ENCODE measurements at regions of chr6 and their contacts with region 1.

Region 1: GRCh38 chr6:42050266-42051032 is at the start of gene TAF8:
- DNase-seq: peak; percentile 82 to 92 (median 86)
- H3K4me3 ChIP-seq: peak within 1 kb of the TSS; percentile 79
- H3K4me3 Mint-ChIP-seq: peak within 1 kb of the TSS; percentile 96 to 99 (median 98)
- H3K27ac ChIP-seq: peak within 1 kb of the TSS; percentile 82
- H3K27ac Mint-ChIP-seq: peak within 1 kb of the TSS; percentile 88 to 98 (median 96)
- H3K4me1 ChIP-seq: peaks cover 55% of the 10 kb centered on the region
- H3K4me1 Mint-ChIP-seq: peaks cover 54 to 77% (median 64%) of the 10 kb centered on the region in 3 donors
- H3K27me3 ChIP-seq: no peaks in the 10 kb centered on the region
- H3K27me3 Mint-ChIP-seq: no peaks in the 10 kb centered on the region
- total RNA-seq, gene TAF8: 41.7 to 42.6 TPM

Region 2: DNA sequence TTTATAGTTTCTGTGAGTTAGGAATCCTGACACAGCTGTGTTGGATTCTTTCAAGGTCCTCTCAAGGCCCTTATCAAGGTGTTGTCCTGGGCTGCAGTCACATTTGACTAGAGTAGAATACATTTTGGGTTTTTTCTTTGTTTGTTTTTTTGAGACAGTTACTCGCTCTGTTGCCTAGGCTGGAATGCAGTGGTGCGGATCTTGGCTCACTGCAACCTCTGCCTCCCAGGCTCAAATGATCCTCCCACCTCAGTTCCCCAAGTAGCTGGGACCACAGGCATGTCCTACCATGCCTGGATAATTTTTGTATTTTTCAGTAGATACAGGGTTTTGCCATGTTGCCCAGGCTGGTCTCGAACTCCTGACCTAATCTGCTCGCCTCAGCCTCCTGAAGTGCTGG is 962.0 kb before region 1 on chr6:
- CTCF ChIA-PET with region 1: no interaction called
- POLR2A ChIA-PET with region 1: interaction called, 10 read pairs
- DNase-seq: no peak
- H3K4me3 ChIP-seq: no peak overlapping the region
- H3K4me3 Mint-ChIP-seq: no peak overlapping the region
- H3K27ac ChIP-seq: no peak overlapping the region
- H3K27ac Mint-ChIP-seq: peak overlapping the region in 2 of 8 donors; percentile 11 to 72
- H3K4me1 ChIP-seq: no peaks in the 10 kb centered on the region
- H3K4me1 Mint-ChIP-seq: peaks cover 15 to 21% (median 17%) of the 10 kb centered on the region in 3 donors
- H3K27me3 ChIP-seq: no peaks in the 10 kb centered on the region
- H3K27me3 Mint-ChIP-seq: no peaks in the 10 kb centered on the region

Region 3: GRCh38 chr6:41787219-41787917 is 263.1 kb before region 1 on chr6 and contains the start of gene TOMM6:
- CTCF ChIA-PET with region 1: interaction called, 175 read pairs
- POLR2A ChIA-PET with region 1: interaction called, 23 read pairs
- DNase-seq: peak; percentile 92 to 96 (median 93)
- H3K4me3 ChIP-seq: peak within 1 kb of the TSS; percentile 100
- H3K4me3 Mint-ChIP-seq: peak within 1 kb of the TSS; percentile 94 to 97 (median 96)
- H3K27ac ChIP-seq: peak within 1 kb of the TSS; percentile 97
- H3K27ac Mint-ChIP-seq: peak within 1 kb of the TSS; percentile 94 to 99 (median 98)
- H3K4me1 ChIP-seq: peaks cover 7% of the 10 kb centered on the region
- H3K4me1 Mint-ChIP-seq: peaks cover 9 to 32% (median 21%) of the 10 kb centered on the region in 3 donors
- H3K27me3 ChIP-seq: no peaks in the 10 kb centered on the region
- H3K27me3 Mint-ChIP-seq: no peaks in the 10 kb centered on the region
- total RNA-seq, gene TOMM6: 399 to 414 TPM

Region 4: GRCh38 chr6:41920921-41921711 is 129.3 kb before region 1 on chr6 and contains the starts of genes BYSL and MED20:
- CTCF ChIA-PET with region 1: interaction called, 91 read pairs
- POLR2A ChIA-PET with region 1: interaction called, 8 read pairs
- DNase-seq: peak; percentile 91 to 95 (median 93)
- H3K4me3 ChIP-seq: peak within 1 kb of the TSS; percentile 97
- H3K4me3 Mint-ChIP-seq: peak within 1 kb of the TSS; percentile 96 to 100 (median 99)
- H3K27ac ChIP-seq: peak within 1 kb of the TSS; percentile 96
- H3K27ac Mint-ChIP-seq: peak within 1 kb of the TSS; percentile 98 to 100 (median 99)
- H3K4me1 ChIP-seq: peaks cover 38% of the 10 kb centered on the region
- H3K4me1 Mint-ChIP-seq: peaks cover 53 to 62% (median 62%) of the 10 kb centered on the region in 3 donors
- H3K27me3 ChIP-seq: no peaks in the 10 kb centered on the region
- H3K27me3 Mint-ChIP-seq: peaks cover 0 to 9% of the 10 kb centered on the region in 2 donors
- total RNA-seq, gene BYSL: 80.5 to 84.4 TPM
- total RNA-seq, gene MED20: 18.1 to 21.1 TPM

Region 5: GRCh38 chr6:41941280-41942066 is 109.0 kb before region 1 on chr6 and contains the start of gene CCND3:
- CTCF ChIA-PET with region 1: interaction called, 167 read pairs
- POLR2A ChIA-PET with region 1: interaction called, 4 read pairs
- DNase-seq: peak; percentile 75 to 88 (median 80)
- H3K4me3 ChIP-seq: peak within 1 kb of the TSS; percentile 84
- H3K4me3 Mint-ChIP-seq: peak within 1 kb of the TSS; percentile 90 to 97 (median 95)
- H3K27ac ChIP-seq: peak within 1 kb of the TSS; percentile 73
- H3K27ac Mint-ChIP-seq: peak within 1 kb of the TSS; percentile 81 to 98 (median 96)
- H3K4me1 ChIP-seq: peaks cover 65% of the 10 kb centered on the region
- H3K4me1 Mint-ChIP-seq: peaks cover 61 to 80% (median 63%) of the 10 kb centered on the region in 3 donors
- H3K27me3 ChIP-seq: no peaks in the 10 kb centered on the region
- H3K27me3 Mint-ChIP-seq: peaks cover 0 to 2% of the 10 kb centered on the region in 2 donors
- total RNA-seq, gene CCND3: 283 to 287 TPM

Region 6: GRCh38 chr6:42038811-42039408 is 11.5 kb before region 1 on chr6:
- CTCF ChIA-PET with region 1: interaction called, 14 read pairs
- POLR2A ChIA-PET with region 1: interaction called, 6 read pairs
- DNase-seq: no peak
- H3K4me3 ChIP-seq: peak overlapping the region; percentile 59
- H3K4me3 Mint-ChIP-seq: peak overlapping the region; percentile 49 to 98 (median 85)
- H3K27ac ChIP-seq: peak overlapping the region; percentile 26
- H3K27ac Mint-ChIP-seq: peak overlapping the region; percentile 73 to 96 (median 88)
- H3K4me1 ChIP-seq: peaks cover 79% of the 10 kb centered on the region
- H3K4me1 Mint-ChIP-seq: peaks cover 64 to 78% (median 76%) of the 10 kb centered on the region in 3 donors
- H3K27me3 ChIP-seq: no peaks in the 10 kb centered on the region
- H3K27me3 Mint-ChIP-seq: peaks cover 0 to 2% of the 10 kb centered on the region in 2 donors

Region 7: GRCh38 chr6:42104095-42104806 is 53.8 kb after region 1 on chr6:
- CTCF ChIA-PET with region 1: interaction called, 23 read pairs
- POLR2A ChIA-PET with region 1: interaction called, 4 read pairs
- DNase-seq: peak; percentile 57 to 78 (median 70)
- H3K4me3 ChIP-seq: peak overlapping the region; percentile 66
- H3K4me3 Mint-ChIP-seq: peak overlapping the region; percentile 65 to 85 (median 71)
- H3K27ac ChIP-seq: peak overlapping the region; percentile 51
- H3K27ac Mint-ChIP-seq: peak overlapping the region in 4 of 8 donors; percentile 17 to 55 (median 44)
- H3K4me1 ChIP-seq: peaks cover 6% of the 10 kb centered on the region
- H3K4me1 Mint-ChIP-seq: peaks cover 7 to 14% (median 7%) of the 10 kb centered on the region in 3 donors
- H3K27me3 ChIP-seq: no peaks in the 10 kb centered on the region
- H3K27me3 Mint-ChIP-seq: no peaks in the 10 kb centered on the region